Esophagus muscularis mucosa (tissue), 4 donors: ENCODE measurements at regions of chr12 and their contacts with region 1.

Region 1: GRCh38 chr12:34218165-34219045 is 196.1 kb downstream of the ALG10 start:
- DNase-seq: no peak
- H3K4me3 ChIP-seq: peak overlapping the region; percentile 30 to 45 (median 37)
- H3K27ac ChIP-seq: no peak overlapping the region
- H3K4me1 ChIP-seq: peaks cover 5 to 11% (median 10%) of the 10 kb centered on the region in 4 donors
- H3K27me3 ChIP-seq: peaks cover 0 to 26% (median 4%) of the 10 kb centered on the region in 4 donors
- CTCF ChIP-seq: peak; percentile 80 to 97 (median 95)
- EP300 ChIP-seq: no peak
- POLR2A ChIP-seq: no peak

Region 2: GRCh38 chr12:34121360-34121759 is 97.0 kb before region 1 on chr12:
- intact Hi-C with region 1: loop called (anchors 5 kb)
- DNase-seq: no peak
- H3K4me3 ChIP-seq: no peak overlapping the region
- H3K27ac ChIP-seq: no peak overlapping the region
- H3K4me1 ChIP-seq: no peaks in the 10 kb centered on the region
- H3K27me3 ChIP-seq: peaks cover 0 to 10% (median 0%) of the 10 kb centered on the region in 4 donors
- CTCF ChIP-seq: no peak
- EP300 ChIP-seq: no peak
- POLR2A ChIP-seq: no peak

Region 3: GRCh38 chr12:34298176-34298970 is 80.0 kb after region 1 on chr12:
- intact Hi-C with region 1: no loop called
- DNase-seq: no peak
- H3K4me3 ChIP-seq: no peak overlapping the region
- H3K27ac ChIP-seq: no peak overlapping the region
- H3K4me1 ChIP-seq: no peaks in the 10 kb centered on the region
- H3K27me3 ChIP-seq: peaks cover 0 to 47% (median 0%) of the 10 kb centered on the region in 4 donors
- CTCF ChIP-seq: no peak
- EP300 ChIP-seq: no peak
- POLR2A ChIP-seq: no peak

Region 4: GRCh38 chr12:34311337-34311736 is 92.9 kb after region 1 on chr12:
- intact Hi-C with region 1: no loop called
- DNase-seq: no peak
- H3K4me3 ChIP-seq: no peak overlapping the region
- H3K27ac ChIP-seq: no peak overlapping the region
- H3K4me1 ChIP-seq: no peaks in the 10 kb centered on the region
- H3K27me3 ChIP-seq: peaks cover 0 to 18% (median 0%) of the 10 kb centered on the region in 4 donors
- CTCF ChIP-seq: no peak
- EP300 ChIP-seq: no peak
- POLR2A ChIP-seq: no peak